ENCODE measurements at regions of chr1 and their contacts with region 1.

Region 1: GRCh38 chr1:44786138-44786840 is 1.7 kb downstream of the BEST4 start:
- DNase-seq: peak; percentile 64 to 73
- ATAC-seq: peak; percentile 57 to 81 (median 74)
- H3K4me3 ChIP-seq: peak overlapping the region; percentile 12 to 62 (median 51)
- H3K27ac ChIP-seq: peak overlapping the region in 9 of 10 donors; percentile 34 to 82 (median 58)
- H3K4me1 ChIP-seq: peaks cover 0 to 34% (median 29%) of the 10 kb centered on the region in 9 donors
- H3K27me3 ChIP-seq: peaks cover 0 to 7% (median 0%) of the 10 kb centered on the region in 7 donors
- CTCF ChIP-seq: peak; percentile 89 to 99 (median 97)

Region 2: GRCh38 chr1:44660176-44660575 is 126.1 kb before region 1 on chr1:
- intact Hi-C with region 1: no loop called
- DNase-seq: peak; percentile 81 to 84
- ATAC-seq: peak; percentile 87 to 97 (median 92)
- H3K4me3 ChIP-seq: no peak overlapping the region
- H3K27ac ChIP-seq: peak overlapping the region in 6 of 10 donors; percentile 38 to 70 (median 62)
- H3K4me1 ChIP-seq: peaks cover 0 to 12% (median 5%) of the 10 kb centered on the region in 9 donors
- H3K27me3 ChIP-seq: no peaks in the 10 kb centered on the region
- CTCF ChIP-seq: no peak

Region 3: DNA sequence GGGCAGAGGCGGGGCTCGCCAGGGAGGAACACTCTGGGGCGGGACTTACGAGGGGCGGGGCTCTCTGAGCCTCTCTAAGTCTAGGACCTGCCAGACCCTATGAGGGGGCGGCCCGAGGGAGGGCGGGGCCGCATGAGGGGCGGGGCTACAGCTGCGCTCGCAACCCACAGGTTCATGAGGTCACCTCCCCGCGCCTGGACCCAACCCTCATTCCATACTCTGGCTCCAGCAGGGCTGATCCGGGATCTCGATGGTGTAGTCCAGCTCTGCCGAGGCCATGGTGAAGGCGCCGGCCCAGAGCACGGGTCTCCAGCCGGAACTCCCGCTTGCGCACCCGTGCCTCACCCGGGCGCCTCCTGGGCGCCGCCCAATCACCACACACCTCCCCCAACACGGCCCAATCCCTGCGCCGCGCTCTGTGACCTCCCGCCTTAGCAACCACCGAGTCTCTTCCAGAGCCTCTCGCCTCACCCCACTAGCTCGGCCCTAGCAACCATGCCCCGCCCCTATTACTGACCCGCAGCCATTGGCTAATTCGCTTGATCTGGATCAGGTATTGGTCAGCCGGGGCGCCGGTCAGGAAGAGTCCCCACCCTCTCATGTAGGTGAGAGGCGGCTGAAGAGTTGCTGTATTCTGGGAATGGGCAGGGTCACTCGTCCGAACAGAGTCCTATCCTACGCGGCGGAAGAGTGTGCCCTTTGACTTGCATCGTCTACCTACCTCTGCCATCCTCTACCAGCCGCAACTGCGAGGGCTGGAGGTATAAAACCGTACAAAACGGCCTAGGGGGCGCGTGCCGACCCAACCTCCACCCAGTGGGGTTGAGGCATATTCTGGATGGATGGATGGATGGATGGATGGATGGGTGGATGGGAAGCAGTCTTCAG is 111.9 kb before region 1 on chr1 and contains the starts of genes ARMH1 and TMEM53:
- intact Hi-C with region 1: no loop called
- DNase-seq: peak; percentile 98 to 99
- ATAC-seq: peak; percentile 96 to 98 (median 98)
- H3K4me3 ChIP-seq: peak within 1 kb of the TSS; percentile 51 to 76 (median 62)
- H3K27ac ChIP-seq: peak within 1 kb of the TSS; percentile 76 to 96 (median 92)
- H3K4me1 ChIP-seq: peaks cover 4 to 70% (median 30%) of the 10 kb centered on the region in 9 donors
- H3K27me3 ChIP-seq: no peaks in the 10 kb centered on the region
- CTCF ChIP-seq: peak in 1 of 9 donors; percentile 12
- total RNA-seq, gene ARMH1: 0.62 to 3.3 (median 1.1) TPM in 5 of 10 donors, not detected in the others
- total RNA-seq, gene TMEM53: 6.6 to 18.6 (median 12.2) TPM

Region 4: DNA sequence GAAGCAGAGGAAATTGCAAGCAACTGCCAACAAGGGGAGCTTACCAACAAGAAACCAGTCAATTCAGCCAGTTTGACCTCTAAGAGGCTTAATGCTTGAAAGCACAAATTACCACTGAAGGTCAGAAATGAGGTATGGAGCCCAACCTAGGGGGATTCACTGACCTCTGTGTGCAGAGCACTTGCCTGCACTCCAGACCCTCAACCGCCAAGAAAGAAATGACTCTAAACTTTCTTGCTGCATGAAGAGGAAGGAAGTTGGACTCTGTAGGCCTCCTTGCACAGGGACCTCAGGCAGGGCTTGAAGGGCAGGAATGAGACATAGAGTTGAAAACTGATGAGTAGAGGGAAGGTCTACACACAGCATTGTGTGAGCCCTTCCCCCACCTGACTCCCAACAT is 101.8 kb before region 1 on chr1:
- intact Hi-C with region 1: no loop called
- DNase-seq: no peak
- ATAC-seq: no peak
- H3K4me3 ChIP-seq: no peak overlapping the region
- H3K27ac ChIP-seq: no peak overlapping the region
- H3K4me1 ChIP-seq: peaks cover 0 to 10% (median 0%) of the 10 kb centered on the region in 9 donors
- H3K27me3 ChIP-seq: no peaks in the 10 kb centered on the region
- CTCF ChIP-seq: no peak

Region 5: GRCh38 chr1:44819608-44820327 is 33.5 kb after region 1 on chr1:
- intact Hi-C with region 1: loop called in 1 of 10 experiments (anchors 5 kb)
- DNase-seq: peak; percentile 79 to 84
- ATAC-seq: peak; percentile 88 to 95 (median 92)
- H3K4me3 ChIP-seq: peak overlapping the region; percentile 47 to 76 (median 64)
- H3K27ac ChIP-seq: peak overlapping the region; percentile 85 to 99 (median 96)
- H3K4me1 ChIP-seq: peaks cover 7 to 30% (median 12%) of the 10 kb centered on the region in 9 donors
- H3K27me3 ChIP-seq: no peaks in the 10 kb centered on the region
- CTCF ChIP-seq: peak in 3 of 9 donors; percentile 24 to 35 (median 33)

Region 6: GRCh38 chr1:44826375-44827196 is 40.3 kb after region 1 on chr1:
- intact Hi-C with region 1: loop called in 6 of 10 experiments (anchors 5 to 10 kb)
- DNase-seq: peak; percentile 66 to 77
- ATAC-seq: peak; percentile 65 to 93 (median 85)
- H3K4me3 ChIP-seq: peak overlapping the region in 4 of 10 donors; percentile 17 to 37 (median 25)
- H3K27ac ChIP-seq: peak overlapping the region in 9 of 10 donors; percentile 39 to 79 (median 53)
- H3K4me1 ChIP-seq: peaks cover 0 to 29% (median 10%) of the 10 kb centered on the region in 9 donors
- H3K27me3 ChIP-seq: no peaks in the 10 kb centered on the region
- CTCF ChIP-seq: no peak

Region 7: GRCh38 chr1:44835738-44836675 is 49.7 kb after region 1 on chr1:
- intact Hi-C with region 1: loop called in 6 of 10 experiments (anchors 5 to 10 kb)
- DNase-seq: peak; percentile 85 to 87
- ATAC-seq: peak; percentile 78 to 89 (median 84)
- H3K4me3 ChIP-seq: no peak overlapping the region
- H3K27ac ChIP-seq: peak overlapping the region in 1 of 10 donors; percentile 8
- H3K4me1 ChIP-seq: peaks cover 0 to 19% (median 0%) of the 10 kb centered on the region in 9 donors
- H3K27me3 ChIP-seq: no peaks in the 10 kb centered on the region
- CTCF ChIP-seq: peak; percentile 74 to 96 (median 86)

Region 8: DNA sequence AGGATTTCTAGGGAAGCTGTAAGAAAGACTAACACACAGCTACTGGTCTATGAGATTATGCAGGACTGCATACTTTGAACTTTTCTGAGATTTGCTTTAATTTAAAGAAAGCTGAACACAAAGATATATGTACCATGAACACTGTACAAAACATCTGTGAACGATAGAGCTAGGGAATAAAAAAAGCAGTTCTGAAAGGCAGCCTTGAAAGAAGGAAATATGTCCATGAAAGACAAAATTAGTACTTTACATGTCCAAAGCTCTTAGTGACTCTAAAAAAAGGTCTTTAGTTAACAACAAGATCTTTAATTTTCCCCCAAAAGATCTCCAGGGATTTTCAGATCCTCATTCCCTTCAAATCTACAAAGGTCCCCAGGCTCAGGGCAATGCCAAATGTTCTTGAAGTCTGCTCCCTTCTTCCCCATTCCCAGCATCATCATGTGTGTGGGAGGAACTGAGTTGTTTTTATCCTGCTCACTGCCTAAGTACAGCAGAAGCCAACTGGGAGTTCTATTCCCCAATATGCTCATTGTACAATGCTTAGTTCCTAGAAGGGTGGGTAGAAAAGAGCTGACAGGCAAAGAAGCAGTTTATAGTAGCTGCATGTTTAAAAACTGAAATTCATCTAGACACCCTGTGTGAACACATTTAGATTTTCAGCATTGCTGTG is 116.9 kb after region 1 on chr1:
- intact Hi-C with region 1: loop called in 1 of 10 experiments (anchors 10 kb)
- DNase-seq: peak in 1 of 2 donors; percentile 71
- ATAC-seq: peak; percentile 59 to 93 (median 88)
- H3K4me3 ChIP-seq: peak overlapping the region in 1 of 10 donors; percentile 12
- H3K27ac ChIP-seq: peak overlapping the region in 6 of 10 donors; percentile 11 to 63 (median 46)
- H3K4me1 ChIP-seq: peaks cover 0 to 22% (median 0%) of the 10 kb centered on the region in 9 donors
- H3K27me3 ChIP-seq: no peaks in the 10 kb centered on the region
- CTCF ChIP-seq: no peak

Measured in heart right ventricle (tissue), 16 donors.